ENCODE measurements at regions of chr3 and their contacts with region 1.

Region 1: GRCh38 chr3:148943506-148944205 is 47.7 kb upstream of the GYG1 start:
- DNase-seq: peak; percentile 69
- H3K4me3 ChIP-seq: no peak overlapping the region
- CTCF ChIP-seq: peak; percentile 50

Region 2: GRCh38 chr3:148727247-148727646 is 216.4 kb before region 1 on chr3:
- CTCF ChIA-PET with region 1: interaction called, 76 read pairs
- POLR2A ChIA-PET with region 1: no interaction called
- DNase-seq: no peak
- H3K4me3 ChIP-seq: no peak overlapping the region
- CTCF ChIP-seq: peak; percentile 60

Region 3: DNA sequence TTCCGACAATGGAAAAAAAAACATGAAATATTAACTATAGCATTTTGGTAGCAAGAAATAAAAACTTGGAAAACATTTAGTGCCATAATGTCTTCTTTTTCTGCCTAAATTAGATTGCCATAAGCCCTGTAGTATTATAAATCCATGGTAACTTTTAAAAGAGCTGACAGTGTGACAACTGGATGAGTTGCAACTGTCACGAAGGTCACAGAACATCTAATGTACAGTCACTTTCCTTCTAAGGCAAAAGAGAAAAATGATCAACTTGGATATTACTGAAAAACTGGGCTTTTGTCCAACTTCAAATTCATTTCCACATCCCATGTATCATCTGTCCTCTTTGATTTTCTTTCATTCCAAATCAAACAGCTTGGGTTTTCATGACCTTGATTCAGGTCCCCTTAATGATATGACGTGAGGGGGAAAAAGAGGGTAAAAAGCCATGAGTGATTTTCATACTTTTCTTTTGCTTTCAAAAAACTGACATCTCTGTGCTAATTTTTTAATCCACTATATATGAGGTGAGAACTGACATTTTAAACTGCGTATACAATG is 115.4 kb before region 1 on chr3:
- CTCF ChIA-PET with region 1: no interaction called
- POLR2A ChIA-PET with region 1: no interaction called
- DNase-seq: no peak
- H3K4me3 ChIP-seq: no peak overlapping the region
- CTCF ChIP-seq: no peak

Measured in AG04449 (cell line).